ENCODE measurements at regions of chr1 and their contacts with region 1.

Region 1: GRCh38 chr1:41919764-41920397 is 1.2 kb upstream of the HIVEP3 start:
- DNase-seq: peak; percentile 83
- H3K4me3 Mint-ChIP-seq: peak overlapping the region; percentile 86
- H3K27ac Mint-ChIP-seq: peak overlapping the region; percentile 95
- H3K4me1 Mint-ChIP-seq: peaks cover 59% of the 10 kb centered on the region
- H3K27me3 Mint-ChIP-seq: peaks cover 4% of the 10 kb centered on the region

Region 2: DNA sequence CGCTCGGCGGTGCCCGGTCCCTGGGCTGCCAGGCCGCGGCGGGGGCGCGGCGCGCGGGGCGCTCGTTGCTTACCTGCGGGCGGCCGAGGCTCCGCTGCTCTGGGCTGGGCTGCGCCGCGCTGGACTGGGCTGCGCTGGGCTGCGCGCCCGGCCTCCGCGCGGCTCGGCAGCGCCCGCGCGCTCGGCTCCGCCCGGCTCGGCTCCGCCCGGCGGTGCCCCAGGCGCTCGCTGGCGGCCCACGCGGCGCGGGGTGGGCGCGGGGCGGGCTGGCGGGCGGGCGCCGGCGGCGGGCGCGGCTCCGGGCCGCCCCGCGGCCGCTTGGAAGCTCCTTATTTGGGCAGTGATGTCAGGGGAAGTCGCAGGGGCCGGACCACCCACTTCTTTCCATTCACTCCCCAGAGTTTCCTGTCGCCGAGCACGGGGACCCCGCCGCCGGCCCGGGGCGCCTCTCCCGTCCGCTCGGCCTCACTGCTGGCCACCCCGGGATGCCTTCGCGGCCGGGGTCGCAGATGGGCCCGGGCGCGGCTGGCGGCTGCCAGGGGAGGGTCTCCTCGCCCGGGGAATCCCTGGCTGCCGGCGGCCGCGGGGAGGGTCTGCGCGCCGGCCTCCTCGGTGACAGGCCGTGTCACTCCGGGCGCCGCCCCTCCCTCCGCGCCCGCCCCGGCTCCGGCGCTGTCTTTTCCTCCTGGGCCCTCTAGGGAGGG is 257.7 kb before region 1 on chr1:
- intact Hi-C with region 1: loop called (anchors 1 kb)
- DNase-seq: peak; percentile 73
- H3K4me3 Mint-ChIP-seq: peak overlapping the region; percentile 70
- H3K27ac Mint-ChIP-seq: peak overlapping the region; percentile 65
- H3K4me1 Mint-ChIP-seq: peaks cover 83% of the 10 kb centered on the region
- H3K27me3 Mint-ChIP-seq: no peaks in the 10 kb centered on the region

Region 3: GRCh38 chr1:41695118-41695745 is 224.6 kb before region 1 on chr1:
- intact Hi-C with region 1: no loop called
- DNase-seq: no peak
- H3K4me3 Mint-ChIP-seq: no peak overlapping the region
- H3K27ac Mint-ChIP-seq: no peak overlapping the region
- H3K4me1 Mint-ChIP-seq: peaks cover 9% of the 10 kb centered on the region
- H3K27me3 Mint-ChIP-seq: peaks cover 2% of the 10 kb centered on the region

Region 4: GRCh38 chr1:41791667-41792484 is 128.0 kb before region 1 on chr1:
- intact Hi-C with region 1: loop called (anchors 5 kb)
- DNase-seq: peak; percentile 11
- H3K4me3 Mint-ChIP-seq: peak overlapping the region; percentile 32
- H3K27ac Mint-ChIP-seq: peak overlapping the region; percentile 89
- H3K4me1 Mint-ChIP-seq: peaks cover 74% of the 10 kb centered on the region
- H3K27me3 Mint-ChIP-seq: no peaks in the 10 kb centered on the region

Region 5: DNA sequence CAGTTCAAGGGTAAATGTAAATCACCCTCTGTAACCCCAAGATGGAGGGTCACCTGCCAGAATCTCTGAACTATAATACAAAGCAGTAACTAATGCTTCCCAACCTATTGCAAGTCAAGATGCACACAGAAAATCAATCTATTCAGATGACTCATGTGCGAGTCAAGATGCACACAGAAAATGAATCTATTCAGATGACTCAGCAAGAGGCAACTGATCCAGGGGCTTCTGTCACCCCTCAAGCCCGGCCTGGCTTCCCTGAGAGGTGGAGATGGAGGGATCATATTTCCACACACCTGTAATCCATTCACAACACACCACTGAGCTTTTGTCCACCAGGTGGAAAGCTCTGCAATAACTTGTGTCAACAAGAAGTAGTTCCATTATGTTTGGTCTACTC is 16.2 kb after region 1 on chr1:
- intact Hi-C with region 1: loop called (anchors 2 kb)
- DNase-seq: no peak
- H3K4me3 Mint-ChIP-seq: no peak overlapping the region
- H3K27ac Mint-ChIP-seq: no peak overlapping the region
- H3K4me1 Mint-ChIP-seq: peaks cover 27% of the 10 kb centered on the region
- H3K27me3 Mint-ChIP-seq: peaks cover 19% of the 10 kb centered on the region

Region 6: GRCh38 chr1:41950820-41951219 is 30.9 kb after region 1 on chr1:
- intact Hi-C with region 1: loop called (anchors 2 kb)
- DNase-seq: no peak
- H3K4me3 Mint-ChIP-seq: no peak overlapping the region
- H3K27ac Mint-ChIP-seq: peak overlapping the region; percentile 62
- H3K4me1 Mint-ChIP-seq: peaks cover 29% of the 10 kb centered on the region
- H3K27me3 Mint-ChIP-seq: no peaks in the 10 kb centered on the region

Region 7: GRCh38 chr1:41983451-41983850 is 63.6 kb after region 1 on chr1:
- intact Hi-C with region 1: loop called (anchors 1 kb)
- DNase-seq: no peak
- H3K4me3 Mint-ChIP-seq: no peak overlapping the region
- H3K27ac Mint-ChIP-seq: no peak overlapping the region
- H3K4me1 Mint-ChIP-seq: peaks cover 33% of the 10 kb centered on the region
- H3K27me3 Mint-ChIP-seq: no peaks in the 10 kb centered on the region

Region 8: DNA sequence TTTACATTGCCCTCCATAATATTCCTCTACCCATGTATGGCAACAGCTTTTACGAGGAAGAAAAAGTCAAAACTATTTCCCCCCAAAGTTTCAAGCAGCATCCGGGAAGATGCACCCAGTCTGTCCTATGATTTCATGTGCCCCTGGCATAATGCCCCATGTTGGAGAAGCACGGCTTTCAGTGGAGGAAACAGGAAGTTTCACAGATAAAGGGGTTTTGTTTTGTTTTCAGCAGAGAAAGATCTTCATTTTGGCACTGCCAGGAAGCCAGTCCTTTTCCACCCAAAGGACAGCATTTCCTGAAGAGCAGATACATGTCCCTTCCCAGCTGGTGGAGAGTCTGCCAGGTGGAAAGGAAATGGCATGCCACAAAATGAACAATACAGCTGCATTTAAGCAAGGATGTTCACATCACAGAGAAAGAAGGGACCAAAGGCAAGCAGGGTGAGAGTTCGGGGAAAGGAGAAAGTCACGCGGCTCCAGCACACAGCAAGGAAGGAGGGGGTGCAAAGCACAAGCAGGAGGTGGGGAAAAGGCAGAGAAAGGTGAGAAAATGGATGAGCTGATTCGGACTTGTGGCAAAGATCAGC is 94.1 kb after region 1 on chr1:
- intact Hi-C with region 1: no loop called
- DNase-seq: no peak
- H3K4me3 Mint-ChIP-seq: peak overlapping the region; percentile 53
- H3K27ac Mint-ChIP-seq: no peak overlapping the region
- H3K4me1 Mint-ChIP-seq: peaks cover 53% of the 10 kb centered on the region
- H3K27me3 Mint-ChIP-seq: no peaks in the 10 kb centered on the region